Activated naive CD4-positive, alpha-beta T cell treated with anti-CD3 and anti-CD28 coated beads for 36 hours (primary cell): ENCODE measurements at regions of chr3 and their contacts with region 1.

Region 1: DNA sequence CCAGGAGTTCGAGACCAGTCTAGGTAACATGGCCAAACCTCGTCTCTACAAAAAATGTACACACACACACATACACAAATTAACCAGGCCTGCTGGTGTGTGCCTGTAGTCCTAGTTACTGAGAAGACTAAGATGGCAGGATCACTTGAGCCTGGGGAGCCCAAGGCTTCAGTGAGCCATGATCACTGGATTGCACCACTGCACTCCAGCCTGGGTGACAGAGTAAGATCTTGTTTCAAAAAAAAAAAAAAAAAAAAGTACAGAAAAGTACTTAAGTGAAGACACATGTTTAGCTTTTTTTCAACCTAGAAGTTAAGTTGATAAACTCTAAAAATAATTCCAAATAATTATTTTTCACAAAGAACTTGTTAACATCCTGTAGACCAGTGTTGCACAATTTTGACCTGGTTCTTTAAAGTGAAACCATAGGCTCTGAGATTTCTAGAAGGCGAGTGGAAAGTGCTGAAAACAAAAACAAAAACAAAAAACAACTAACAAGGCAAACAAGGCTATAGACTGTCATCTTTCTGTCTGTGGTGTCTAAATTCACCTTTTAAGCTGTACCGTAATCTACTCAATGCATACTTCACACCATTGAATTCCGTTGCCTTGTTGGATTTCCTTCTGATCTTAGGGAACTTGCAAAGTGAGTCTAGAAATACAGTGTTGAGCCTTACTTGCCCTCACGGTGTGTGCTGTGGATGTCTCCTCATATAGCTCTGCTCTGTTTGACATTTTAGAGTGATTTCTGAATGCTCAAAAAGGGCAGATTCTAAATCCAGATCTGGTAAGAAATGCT is 63.5 kb downstream of the CHST2 start:
- DNase-seq: no peak
- H3K4me3 Mint-ChIP-seq: no peak overlapping the region
- H3K27ac Mint-ChIP-seq: no peak overlapping the region
- H3K4me1 Mint-ChIP-seq: peaks cover 19% of the 10 kb centered on the region
- H3K27me3 Mint-ChIP-seq: no peaks in the 10 kb centered on the region

Region 2: GRCh38 chr3:143171141-143171970 is 11.7 kb before region 1 on chr3:
- CTCF ChIA-PET with region 1: interaction called, 3 read pairs
- intact Hi-C with region 1: loop called (anchors 1 kb)
- DNase-seq: peak; percentile 26
- H3K4me3 Mint-ChIP-seq: peak overlapping the region; percentile 7
- H3K27ac Mint-ChIP-seq: peak overlapping the region; percentile 82
- H3K4me1 Mint-ChIP-seq: peaks cover 67% of the 10 kb centered on the region
- H3K27me3 Mint-ChIP-seq: no peaks in the 10 kb centered on the region

Region 3: DNA sequence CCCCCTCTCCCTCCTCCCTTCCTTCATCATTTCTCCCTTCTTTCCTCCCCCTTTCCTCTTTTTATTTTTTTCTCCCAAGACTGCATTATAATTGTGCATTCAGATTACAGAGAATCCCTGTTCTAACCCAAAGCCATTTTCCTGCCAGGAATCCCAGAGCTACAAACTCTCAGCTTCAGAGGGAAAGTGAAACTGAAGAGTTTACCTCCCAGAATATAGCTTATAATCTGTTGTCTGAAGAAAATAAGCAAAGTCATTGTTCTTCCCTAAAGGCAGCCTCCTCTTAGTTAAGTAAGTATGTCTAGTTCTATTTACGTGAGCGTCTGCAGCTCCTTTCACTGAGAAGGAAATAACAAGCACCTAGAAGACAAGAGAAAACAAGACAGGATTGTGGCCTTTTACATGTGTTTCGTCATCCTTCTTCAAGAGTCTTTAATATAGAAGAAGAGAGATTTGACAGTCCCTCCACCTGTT is 33.7 kb after region 1 on chr3:
- CTCF ChIA-PET with region 1: no interaction called
- intact Hi-C with region 1: no loop called
- DNase-seq: no peak
- H3K4me3 Mint-ChIP-seq: peak overlapping the region; percentile 43
- H3K27ac Mint-ChIP-seq: peak overlapping the region; percentile 25
- H3K4me1 Mint-ChIP-seq: peaks cover 20% of the 10 kb centered on the region
- H3K27me3 Mint-ChIP-seq: no peaks in the 10 kb centered on the region